Transverse colon (tissue), 4 donors: ENCODE measurements at regions of chr1 and their contacts with region 1.

Region 1: GRCh38 chr1:61049850-61050540 is 32.4 kb upstream of the NFIA start:
- DNase-seq: peak; percentile 96
- H3K4me3 ChIP-seq: peak overlapping the region; percentile 89 to 96 (median 94)
- H3K27ac ChIP-seq: peak overlapping the region; percentile 93 to 96 (median 96)
- H3K4me1 ChIP-seq: peaks cover 3 to 37% (median 15%) of the 10 kb centered on the region in 4 donors
- H3K27me3 ChIP-seq: peaks cover 2% of the 10 kb centered on the region
- CTCF ChIP-seq: peak; percentile 96 to 98 (median 97)
- EP300 ChIP-seq: no peak
- POLR2A ChIP-seq: peak; percentile 43

Region 2: DNA sequence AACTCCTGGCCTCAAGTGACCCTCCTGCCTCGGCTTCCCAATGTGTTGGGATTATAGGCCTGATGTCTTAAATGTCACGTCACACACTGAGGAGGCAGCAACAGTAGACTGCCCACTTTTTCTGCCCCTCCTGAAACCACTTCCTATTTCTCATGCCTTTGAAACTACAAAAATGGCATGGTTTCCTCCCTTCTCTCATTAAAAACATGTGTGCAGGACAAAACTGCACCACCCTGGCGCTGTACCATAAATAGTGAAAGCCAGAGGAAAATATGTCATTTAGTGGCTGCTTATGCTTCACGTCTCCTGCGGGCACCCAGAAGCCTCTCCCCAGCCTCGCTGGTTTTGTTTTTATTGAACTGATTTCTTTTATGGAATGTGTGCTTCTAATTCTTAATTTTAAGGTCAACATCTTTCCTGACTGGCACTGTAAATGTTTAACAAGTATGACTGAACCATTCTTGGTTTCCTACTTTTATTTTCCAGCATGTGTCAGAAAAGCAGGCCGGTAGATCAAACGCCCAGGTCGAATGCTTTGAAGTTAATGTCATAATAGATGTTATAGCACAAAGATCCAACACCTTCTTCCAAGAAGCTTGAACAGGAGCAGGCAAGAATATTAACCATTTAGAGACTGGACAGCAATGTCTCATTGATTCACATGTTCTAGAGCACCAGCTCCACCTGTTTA is 916.9 kb before region 1 on chr1:
- in situ Hi-C with region 1: loop called in 1 of 4 experiments (anchors 25 kb)
- intact Hi-C with region 1: no loop called
- DNase-seq: peak; percentile 13
- H3K4me3 ChIP-seq: no peak overlapping the region
- H3K27ac ChIP-seq: no peak overlapping the region
- H3K4me1 ChIP-seq: peaks cover 0 to 13% (median 4%) of the 10 kb centered on the region in 4 donors
- H3K27me3 ChIP-seq: no peaks in the 10 kb centered on the region
- CTCF ChIP-seq: no peak
- EP300 ChIP-seq: no peak
- POLR2A ChIP-seq: no peak

Region 3: DNA sequence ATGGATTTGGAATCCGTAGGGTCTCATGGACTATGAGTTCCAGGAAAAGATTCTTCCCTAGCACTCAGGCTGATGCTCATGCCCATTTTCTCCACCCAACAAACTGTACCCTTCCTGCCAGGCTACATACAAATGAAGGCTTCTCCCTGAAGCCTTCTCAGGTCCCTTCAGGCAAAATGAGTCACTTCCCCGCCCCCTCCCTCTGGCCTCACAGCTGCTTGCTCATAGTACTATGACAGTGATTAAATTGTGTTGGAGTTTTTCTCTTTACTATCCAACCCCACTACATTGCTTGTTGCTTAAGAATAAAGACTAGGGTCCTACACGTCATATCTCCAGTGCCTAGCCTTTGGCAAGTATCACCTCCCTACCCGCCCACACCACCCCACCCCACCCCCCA is 175.3 kb before region 1 on chr1:
- in situ Hi-C with region 1: loop called in 1 of 4 experiments (anchors 25 kb)
- intact Hi-C with region 1: no loop called
- DNase-seq: no peak
- H3K4me3 ChIP-seq: no peak overlapping the region
- H3K27ac ChIP-seq: no peak overlapping the region
- H3K4me1 ChIP-seq: peaks cover 0 to 8% (median 1%) of the 10 kb centered on the region in 4 donors
- H3K27me3 ChIP-seq: no peaks in the 10 kb centered on the region
- CTCF ChIP-seq: no peak
- EP300 ChIP-seq: no peak
- POLR2A ChIP-seq: no peak

Region 4: GRCh38 chr1:61253059-61253735 is 203.2 kb after region 1 on chr1:
- in situ Hi-C with region 1: no loop called
- intact Hi-C with region 1: loop called (anchors 10 kb)
- DNase-seq: peak; percentile 86
- H3K4me3 ChIP-seq: no peak overlapping the region
- H3K27ac ChIP-seq: peak overlapping the region; percentile 61 to 77 (median 76)
- H3K4me1 ChIP-seq: peaks cover 13 to 48% (median 26%) of the 10 kb centered on the region in 4 donors
- H3K27me3 ChIP-seq: no peaks in the 10 kb centered on the region
- CTCF ChIP-seq: no peak
- EP300 ChIP-seq: no peak
- POLR2A ChIP-seq: no peak

Region 5: GRCh38 chr1:61397935-61398334 is 347.9 kb after region 1 on chr1:
- in situ Hi-C with region 1: no loop called
- intact Hi-C with region 1: no loop called
- DNase-seq: no peak
- H3K4me3 ChIP-seq: no peak overlapping the region
- H3K27ac ChIP-seq: peak overlapping the region; percentile 39 to 67 (median 48)
- H3K4me1 ChIP-seq: peaks cover 0 to 26% (median 11%) of the 10 kb centered on the region in 4 donors
- H3K27me3 ChIP-seq: no peaks in the 10 kb centered on the region
- CTCF ChIP-seq: no peak
- EP300 ChIP-seq: no peak
- POLR2A ChIP-seq: no peak

Region 6: DNA sequence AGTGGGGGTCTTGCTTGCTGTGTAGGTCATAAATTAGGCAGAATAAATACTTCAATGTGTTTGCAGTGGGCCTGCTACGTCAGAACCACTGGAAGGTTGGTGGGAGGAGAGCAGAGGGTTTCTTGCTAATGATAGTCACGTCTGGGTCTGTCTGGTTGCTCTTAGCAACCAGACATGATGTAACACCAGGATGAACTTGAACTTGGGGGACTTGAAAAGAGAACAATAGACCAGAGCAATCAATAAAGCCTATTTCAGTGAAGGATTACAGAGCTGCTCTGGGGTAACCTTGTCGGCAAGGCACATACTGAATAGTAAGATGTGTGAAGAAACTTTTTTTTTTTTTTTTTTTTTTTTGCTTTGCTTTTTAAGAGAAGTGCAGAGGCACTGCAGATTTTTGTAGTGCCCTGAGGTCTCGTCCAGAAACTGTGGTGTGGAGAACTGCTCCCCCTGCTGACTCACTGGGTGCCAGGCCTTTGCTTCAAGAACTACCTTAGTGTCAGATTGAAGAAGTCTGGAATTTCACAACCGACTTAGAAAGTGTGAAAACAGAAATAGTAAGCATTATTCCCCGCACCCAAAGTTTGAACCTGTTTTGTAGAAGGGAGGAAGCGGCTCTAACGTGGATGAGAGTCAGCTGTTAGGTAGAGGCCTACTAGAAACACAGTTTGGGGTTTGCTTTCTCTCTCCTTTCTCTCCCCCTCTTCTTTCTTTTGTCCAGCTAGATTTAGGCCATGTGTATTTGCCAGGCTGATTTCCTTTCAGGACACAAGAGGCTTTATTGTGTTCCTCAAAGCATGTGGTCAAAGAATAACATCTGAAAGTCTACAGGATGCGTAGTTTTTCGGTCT is 403.3 kb after region 1 on chr1:
- in situ Hi-C with region 1: loop called in 3 of 4 experiments (anchors 10 to 25 kb)
- intact Hi-C with region 1: loop called (anchors 5 kb)
- DNase-seq: peak; percentile 85
- H3K4me3 ChIP-seq: no peak overlapping the region
- H3K27ac ChIP-seq: peak overlapping the region; percentile 74 to 82 (median 80)
- H3K4me1 ChIP-seq: peaks cover 26 to 63% (median 47%) of the 10 kb centered on the region in 4 donors
- H3K27me3 ChIP-seq: no peaks in the 10 kb centered on the region
- CTCF ChIP-seq: peak; percentile 64 to 78 (median 72)
- EP300 ChIP-seq: no peak
- POLR2A ChIP-seq: no peak

Region 7: DNA sequence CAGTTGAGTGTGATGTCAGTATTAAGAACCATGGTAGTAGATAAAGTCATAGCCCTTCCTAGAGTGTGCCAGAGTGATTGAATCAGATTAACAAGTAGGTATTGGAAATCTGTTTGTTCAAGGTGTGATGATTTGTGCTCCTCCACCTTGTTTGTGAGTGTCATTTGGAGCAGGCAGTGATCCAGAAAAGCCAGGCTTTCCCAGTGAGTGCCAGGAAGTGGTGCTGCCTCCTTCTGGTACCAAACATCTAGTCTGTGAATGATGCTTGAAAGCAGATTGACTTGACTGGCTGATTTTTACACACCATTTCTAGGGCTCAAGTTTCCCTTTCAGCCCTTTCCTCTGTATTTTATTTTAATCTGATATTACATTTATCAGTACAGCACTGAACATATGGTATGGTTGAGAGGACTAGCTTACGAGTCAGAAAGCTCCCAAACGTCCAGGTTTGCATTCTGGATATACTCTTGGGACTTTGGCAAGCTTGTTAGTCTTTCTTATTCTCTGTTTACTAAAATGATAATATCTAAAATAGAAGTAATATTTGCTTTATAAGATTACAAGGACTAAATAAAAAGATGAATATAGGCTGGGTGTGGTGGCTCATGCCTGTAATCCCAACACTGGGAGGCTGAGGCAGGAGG is 793.0 kb after region 1 on chr1:
- in situ Hi-C with region 1: loop called in 1 of 4 experiments (anchors 25 kb)
- intact Hi-C with region 1: no loop called
- DNase-seq: no peak
- H3K4me3 ChIP-seq: no peak overlapping the region
- H3K27ac ChIP-seq: no peak overlapping the region
- H3K4me1 ChIP-seq: peaks cover 0 to 3% (median 0%) of the 10 kb centered on the region in 4 donors
- H3K27me3 ChIP-seq: no peaks in the 10 kb centered on the region
- CTCF ChIP-seq: no peak
- EP300 ChIP-seq: no peak
- POLR2A ChIP-seq: no peak